Activated CD4-positive, alpha-beta T cell treated with anti-CD3 and anti-CD28 coated beads, Interleukin-2, amount 10 ng/mL, durations not matched to agents 24 days and 14 days (primary cell): ENCODE measurements at regions of chr3 and their contacts with region 1.

Region 1: GRCh38 chr3:195542698-195543499 is at the start of gene PPP1R2:
- DNase-seq: peak; percentile 97
- H3K4me3 Mint-ChIP-seq: peak within 1 kb of the TSS; percentile 89
- H3K27ac Mint-ChIP-seq: peak within 1 kb of the TSS; percentile 87
- H3K4me1 Mint-ChIP-seq: peaks cover 72% of the 10 kb centered on the region
- H3K27me3 Mint-ChIP-seq: no peaks in the 10 kb centered on the region
- total RNA-seq, gene PPP1R2: 75.2 and 78.2 TPM in 2 replicates

Region 2: GRCh38 chr3:194486540-194487288 is 1056.2 kb before region 1 on chr3 and contains the start of gene ATP13A3:
- intact Hi-C with region 1: loop called (anchors 10 kb)
- DNase-seq: peak; percentile 96
- H3K4me3 Mint-ChIP-seq: peak within 1 kb of the TSS; percentile 94
- H3K27ac Mint-ChIP-seq: peak within 1 kb of the TSS; percentile 97
- H3K4me1 Mint-ChIP-seq: peaks cover 53% of the 10 kb centered on the region
- H3K27me3 Mint-ChIP-seq: no peaks in the 10 kb centered on the region
- total RNA-seq, gene ATP13A3: 181 and 193 TPM in 2 replicates

Region 3: DNA sequence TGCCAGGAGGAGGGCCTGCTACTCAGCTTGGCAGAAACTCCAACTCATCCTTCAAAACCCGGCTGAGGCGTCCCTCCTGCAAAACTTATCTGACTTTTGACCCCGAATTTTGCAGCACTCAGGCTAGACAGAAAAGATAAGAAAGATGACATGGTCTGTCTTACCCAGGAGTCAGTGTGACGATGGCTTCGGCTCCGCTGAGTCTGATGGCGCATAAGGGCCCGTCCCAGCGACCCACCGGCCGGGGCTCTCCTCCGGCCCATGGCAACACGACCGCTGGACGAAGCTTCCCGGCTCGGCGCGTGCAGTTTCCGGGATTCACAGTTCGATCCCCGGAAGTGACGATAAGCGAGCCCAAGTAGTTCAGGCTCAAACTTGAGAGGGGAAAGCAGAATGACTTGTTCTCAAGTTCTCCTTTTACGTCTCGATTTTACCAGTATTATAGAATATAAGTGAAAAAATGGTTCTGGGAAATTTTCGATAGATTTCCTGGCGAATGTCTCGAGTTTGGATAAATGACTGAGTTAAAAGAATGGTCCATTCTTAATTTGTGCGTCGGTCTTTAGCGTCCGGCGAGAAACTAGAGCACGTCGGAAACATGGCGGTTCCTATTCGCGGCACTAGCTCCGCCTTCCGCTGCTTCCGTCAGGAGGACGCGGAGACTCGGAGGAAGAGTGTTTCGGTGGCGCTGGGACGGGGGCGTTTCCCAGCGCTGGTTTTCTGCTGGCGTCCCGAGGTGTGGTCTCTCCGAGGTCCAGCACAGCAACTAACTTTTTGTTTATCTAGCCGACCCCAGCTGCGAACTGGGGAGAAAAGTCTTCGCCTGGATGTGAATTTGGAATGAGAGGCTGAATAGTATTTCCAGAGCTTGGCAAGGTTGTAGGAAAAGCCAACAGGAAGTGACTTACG is 870.7 kb before region 1 on chr3 and contains the start of gene LSG1:
- intact Hi-C with region 1: loop called (anchors 5 kb)
- DNase-seq: peak; percentile 97
- H3K4me3 Mint-ChIP-seq: peak within 1 kb of the TSS; percentile 99
- H3K27ac Mint-ChIP-seq: peak within 1 kb of the TSS; percentile 97
- H3K4me1 Mint-ChIP-seq: peaks cover 48% of the 10 kb centered on the region
- H3K27me3 Mint-ChIP-seq: no peaks in the 10 kb centered on the region
- total RNA-seq, gene LSG1: 59.0 and 60.2 TPM in 2 replicates

Region 4: DNA sequence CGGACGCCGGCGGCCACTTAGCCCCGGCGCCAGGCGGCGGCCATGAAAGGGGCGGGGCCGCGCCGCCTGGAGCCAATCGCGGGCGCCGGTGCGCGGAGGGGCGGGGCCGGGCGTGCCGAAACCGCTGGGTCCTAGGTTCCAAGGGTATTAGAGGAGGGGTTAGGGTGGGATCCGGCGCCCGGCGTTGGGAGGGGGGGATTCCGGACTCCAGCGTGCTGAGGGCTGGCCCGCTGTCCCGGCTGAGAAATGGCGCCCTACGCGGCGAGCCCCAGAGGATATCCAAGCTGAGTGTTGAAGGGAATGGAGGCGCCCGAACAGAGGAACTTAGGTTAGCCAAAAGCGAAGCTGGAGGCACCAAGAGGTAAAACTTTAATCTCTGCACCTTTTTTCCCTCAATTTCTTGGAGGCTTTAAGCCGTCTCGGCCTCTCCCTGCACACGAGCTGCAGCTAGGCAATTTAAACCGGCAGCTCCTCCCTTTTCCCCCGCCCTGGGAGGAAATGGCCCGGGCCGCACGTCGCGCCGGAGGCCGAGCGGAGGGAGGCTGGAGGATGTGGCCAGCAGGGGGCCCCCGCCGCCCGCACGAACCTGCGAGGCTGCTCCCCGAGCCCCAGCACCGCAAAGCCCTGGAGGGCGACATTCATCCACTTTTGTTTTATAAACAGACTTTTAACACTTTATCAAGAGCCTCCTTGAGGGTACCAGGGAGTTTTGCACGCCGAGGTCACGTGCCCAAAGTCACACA is 271.6 kb before region 1 on chr3 and contains the start of gene XXYLT1:
- intact Hi-C with region 1: loop called (anchors 5 kb)
- DNase-seq: peak; percentile 97
- H3K4me3 Mint-ChIP-seq: peak within 1 kb of the TSS; percentile 88
- H3K27ac Mint-ChIP-seq: peak within 1 kb of the TSS; percentile 90
- H3K4me1 Mint-ChIP-seq: peaks cover 17% of the 10 kb centered on the region
- H3K27me3 Mint-ChIP-seq: no peaks in the 10 kb centered on the region
- total RNA-seq, gene XXYLT1: 14.5 and 17.4 TPM in 2 replicates

Region 5: DNA sequence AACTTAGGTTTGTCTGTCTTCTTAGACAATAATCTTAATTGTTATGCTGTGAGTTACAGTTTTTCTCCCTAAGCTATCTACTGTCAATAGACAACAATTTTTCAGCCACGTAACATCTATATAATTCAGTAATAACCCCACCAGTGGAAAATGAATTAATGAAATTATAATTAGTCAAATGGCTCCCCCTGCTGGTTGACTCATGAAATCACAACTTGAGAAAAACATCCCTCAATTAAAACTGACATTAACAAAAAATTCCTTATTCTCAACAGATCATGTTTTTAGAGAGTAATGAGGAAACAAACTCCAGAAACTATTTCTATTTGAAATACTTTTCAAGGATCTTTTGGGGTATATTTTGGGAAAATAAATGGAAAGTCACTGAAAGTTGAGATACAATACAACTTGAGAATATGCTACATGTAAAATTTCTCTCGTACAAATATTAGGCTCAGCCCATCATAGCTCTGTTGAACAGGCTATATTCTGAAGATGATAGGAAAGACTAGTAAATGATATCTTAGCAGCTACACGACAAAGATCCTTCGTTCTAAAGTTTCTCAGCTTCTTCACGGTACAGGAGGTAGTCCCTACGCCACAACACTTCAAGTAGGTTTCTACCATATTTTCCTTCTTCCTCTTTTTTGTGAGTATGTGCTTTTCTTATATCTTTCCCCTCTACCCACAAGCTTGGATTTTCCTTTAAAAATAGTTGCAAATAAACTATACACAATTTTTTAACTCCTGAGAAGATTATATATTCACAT is 20.5 kb before region 1 on chr3:
- intact Hi-C with region 1: loop called (anchors 2 kb)
- DNase-seq: peak; percentile 73
- H3K4me3 Mint-ChIP-seq: no peak overlapping the region
- H3K27ac Mint-ChIP-seq: peak overlapping the region; percentile 18
- H3K4me1 Mint-ChIP-seq: peaks cover 25% of the 10 kb centered on the region
- H3K27me3 Mint-ChIP-seq: no peaks in the 10 kb centered on the region

Region 6: DNA sequence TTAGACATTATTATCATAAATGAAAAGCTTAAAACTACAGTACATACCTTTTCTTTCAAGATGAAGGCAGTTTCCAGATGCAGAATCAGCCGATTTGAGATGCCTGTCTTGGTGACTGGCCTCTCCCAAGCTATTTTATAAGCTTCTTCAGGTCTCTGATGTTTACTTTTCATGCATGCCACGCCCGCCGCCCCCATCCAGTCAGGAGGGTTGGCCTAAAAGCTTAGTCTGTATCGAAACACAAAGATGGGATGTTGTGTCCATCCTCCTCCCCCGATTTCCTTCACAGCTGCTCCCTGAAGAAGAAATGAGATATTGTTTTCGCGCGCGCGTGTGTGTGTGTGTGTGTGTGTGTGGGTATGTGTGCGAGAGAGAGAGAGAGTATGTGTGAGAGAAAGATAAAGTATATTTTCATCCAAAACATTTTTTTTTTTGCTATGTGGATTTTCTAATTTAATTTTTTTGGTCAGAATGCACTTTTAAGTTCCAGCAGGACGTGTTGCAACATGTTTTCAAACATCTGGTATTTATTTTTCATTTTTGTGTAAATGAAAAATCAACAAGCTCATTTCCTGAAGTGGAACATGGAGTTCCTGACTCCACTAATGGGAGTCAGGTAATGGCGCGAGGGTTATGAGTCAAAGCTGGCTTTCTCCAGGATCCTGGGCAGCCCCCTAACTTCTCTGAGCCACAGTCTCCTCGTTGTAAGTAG is 41.1 kb after region 1 on chr3 and contains the start of gene APOD:
- intact Hi-C with region 1: loop called (anchors 1 kb)
- DNase-seq: no peak
- H3K4me3 Mint-ChIP-seq: no peak within 1 kb of the TSS
- H3K27ac Mint-ChIP-seq: peak within 1 kb of the TSS; percentile 50
- H3K4me1 Mint-ChIP-seq: peaks cover 16% of the 10 kb centered on the region
- H3K27me3 Mint-ChIP-seq: peaks cover 2% of the 10 kb centered on the region
- total RNA-seq, gene APOD: 1.8 and 2.6 TPM in 2 replicates

Region 7: GRCh38 chr3:195909644-195910508 is 367.0 kb after region 1 on chr3:
- intact Hi-C with region 1: loop called (anchors 5 kb)
- DNase-seq: peak; percentile 96
- H3K4me3 Mint-ChIP-seq: peak overlapping the region; percentile 66
- H3K27ac Mint-ChIP-seq: peak overlapping the region; percentile 84
- H3K4me1 Mint-ChIP-seq: peaks cover 36% of the 10 kb centered on the region
- H3K27me3 Mint-ChIP-seq: no peaks in the 10 kb centered on the region